HEK293T (cell line): ENCODE measurements at regions of chr16 and their contacts with region 1.

Region 1: DNA sequence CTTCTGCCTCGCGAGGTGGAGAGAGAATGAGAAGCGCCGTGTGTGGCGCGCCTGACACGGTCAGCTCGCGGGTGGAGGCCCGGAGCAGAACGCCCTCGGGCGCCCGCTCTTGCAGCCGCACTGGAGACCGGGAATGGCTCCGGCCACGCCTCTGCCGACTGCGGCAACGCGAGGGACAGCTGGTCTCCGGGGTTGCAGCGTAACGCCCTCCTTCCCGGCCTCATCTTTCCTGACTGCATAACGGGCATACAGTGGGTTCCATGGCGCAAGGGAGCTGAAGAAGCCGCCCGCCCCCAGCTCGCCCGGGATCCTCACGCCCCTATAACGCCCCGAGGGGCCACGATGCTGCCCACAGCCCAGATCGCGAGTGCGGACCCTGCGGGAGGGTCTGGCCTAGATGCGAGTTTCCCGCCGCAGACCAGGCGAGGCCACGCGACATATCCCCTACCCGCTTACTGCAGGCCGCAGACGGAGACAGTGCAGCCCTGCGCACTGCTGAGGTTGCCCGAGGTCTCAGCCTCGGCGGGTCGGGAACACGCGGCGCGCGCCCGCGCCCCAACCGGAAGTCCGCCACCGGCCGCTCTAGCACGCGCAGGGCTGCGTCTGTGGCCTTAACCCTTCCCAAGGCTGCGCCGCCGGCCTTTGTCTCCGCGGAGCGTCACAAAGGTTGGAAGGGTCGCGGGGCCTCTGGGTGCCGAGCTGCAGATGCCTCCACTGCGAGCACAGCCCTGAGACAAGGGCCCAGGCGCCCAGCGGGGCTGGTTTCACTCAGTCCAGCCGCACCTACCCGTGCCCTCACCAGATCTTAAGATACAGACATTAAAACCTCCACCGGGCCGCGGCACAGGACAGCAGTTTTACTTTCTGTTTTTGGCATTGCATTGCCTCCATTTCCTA is 18.8 kb downstream of the BCL7C start:
- DNase-seq: peak; percentile 97

Region 2: DNA sequence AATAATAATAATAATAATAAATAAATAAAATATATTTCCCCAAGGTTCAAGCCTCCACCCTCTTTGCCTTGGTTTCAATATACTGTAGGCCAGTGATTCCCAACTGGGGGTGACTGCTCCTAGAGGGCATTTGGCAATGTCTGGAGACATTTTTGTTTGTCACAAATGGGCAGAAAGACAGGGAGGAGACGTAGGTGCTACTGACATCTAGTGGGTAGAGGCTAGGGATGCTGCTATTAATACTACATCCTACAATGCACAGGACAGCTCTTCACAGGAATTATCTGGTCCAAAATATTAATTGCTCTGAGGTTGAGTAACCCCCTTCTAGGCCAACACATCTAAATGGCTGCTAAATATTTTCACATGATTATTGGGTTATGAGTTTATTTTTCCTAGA is 237.1 kb before region 1 on chr16:
- CTCF ChIA-PET with region 1: no interaction called
- POLR2A ChIA-PET with region 1: no interaction called
- DNase-seq: peak; percentile 48

Region 3: DNA sequence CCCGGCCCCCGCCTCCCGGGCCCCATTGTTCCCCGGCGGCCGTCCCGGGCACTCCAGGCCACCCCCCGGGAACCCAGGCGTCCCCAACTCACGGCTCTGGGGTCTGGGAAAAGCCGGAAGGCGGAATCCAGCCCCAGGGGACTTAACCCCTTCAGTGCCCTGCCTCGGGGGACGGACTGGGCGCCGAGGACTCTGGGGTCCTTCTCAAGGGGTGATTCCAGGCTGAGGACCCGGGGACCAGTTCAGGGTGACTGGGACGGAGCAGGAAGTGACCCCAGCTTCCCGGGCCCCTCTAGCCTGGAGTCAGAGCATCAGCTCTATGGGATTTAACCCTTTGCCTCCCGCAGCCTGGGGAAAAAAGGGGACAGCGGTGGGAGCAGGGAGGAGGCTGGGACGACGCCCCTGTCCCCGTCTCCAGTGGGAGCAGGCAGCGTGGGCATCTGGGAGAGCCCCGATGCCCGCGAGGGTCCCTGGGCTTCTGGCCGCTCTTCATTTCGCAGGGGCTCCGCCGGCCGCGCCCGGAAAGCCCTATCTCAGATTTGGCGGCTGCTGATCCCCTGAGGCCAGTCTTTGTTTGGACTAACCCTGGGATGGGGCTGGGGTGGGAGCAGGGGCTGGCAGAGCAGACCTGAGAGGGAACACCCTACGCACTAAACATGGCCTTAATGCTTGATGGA is 88.0 kb before region 1 on chr16 and contains the start of gene ZNF629:
- CTCF ChIA-PET with region 1: interaction called, 5 read pairs
- POLR2A ChIA-PET with region 1: interaction called, 15 read pairs
- DNase-seq: peak; percentile 86

Region 4: DNA sequence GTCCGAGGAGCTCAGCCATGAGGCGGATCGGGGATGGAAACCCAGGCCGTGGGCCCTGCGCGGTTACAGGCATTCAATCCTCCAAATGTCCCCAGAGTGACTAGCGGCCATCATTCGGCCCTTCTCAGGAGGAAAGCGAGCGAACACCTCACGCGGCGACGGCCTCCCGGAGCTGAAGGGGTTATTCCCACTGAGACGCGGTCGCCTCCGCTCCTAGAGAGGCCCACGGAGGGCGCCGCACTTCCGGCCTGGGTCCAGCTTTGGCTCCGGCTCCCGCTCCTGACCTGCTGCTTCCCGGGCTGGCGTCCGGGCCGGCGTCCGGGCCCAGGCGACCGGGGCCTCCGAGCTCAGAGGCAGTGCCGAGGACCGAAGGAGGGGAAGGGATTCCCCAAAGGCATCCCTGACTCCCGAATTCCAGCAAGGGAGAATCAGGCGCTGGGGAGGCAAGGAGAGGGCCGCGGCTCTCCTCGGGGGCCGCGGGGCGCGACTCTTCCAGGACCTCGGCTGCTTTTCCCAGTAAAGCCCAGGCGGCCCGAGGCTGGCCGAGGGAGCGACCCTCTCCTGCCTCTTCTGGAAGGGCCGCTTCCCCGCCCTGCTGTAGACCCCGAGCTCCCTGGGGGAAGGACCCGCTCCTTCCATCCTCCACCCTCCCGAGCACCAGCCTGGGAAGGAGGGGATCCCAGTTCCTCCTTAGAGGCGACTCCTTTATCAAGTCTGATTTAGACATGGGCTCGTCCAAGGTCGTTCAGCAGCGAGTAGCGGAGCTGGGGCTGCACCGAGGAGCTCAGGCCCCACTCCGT is 69.5 kb before region 1 on chr16:
- CTCF ChIA-PET with region 1: interaction called, 4 read pairs
- POLR2A ChIA-PET with region 1: interaction called, 55 read pairs
- DNase-seq: peak; percentile 95

Region 5: GRCh38 chr16:30844671-30845449 is 30.2 kb before region 1 on chr16:
- CTCF ChIA-PET with region 1: interaction called, 9 read pairs
- POLR2A ChIA-PET with region 1: interaction called, 31 read pairs
- DNase-seq: peak; percentile 93

Region 6: DNA sequence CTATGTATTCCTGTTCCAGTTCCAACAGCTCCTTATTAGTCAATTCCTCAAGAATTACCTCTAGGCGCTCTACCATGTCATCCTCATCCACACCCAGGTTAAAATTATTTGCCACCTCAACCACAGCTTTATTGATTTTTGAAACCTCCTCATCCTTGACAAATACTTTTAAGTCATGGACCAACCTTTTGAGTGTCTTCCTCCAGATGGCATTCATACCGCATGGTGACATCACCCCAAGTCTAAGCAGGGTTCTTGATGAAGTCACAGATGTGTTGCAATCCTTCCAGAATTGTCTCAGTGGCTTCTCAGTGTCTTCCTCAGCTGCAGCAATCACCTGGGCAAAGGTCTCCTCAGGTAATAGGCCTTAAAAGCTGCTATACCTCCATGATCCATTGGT is 21.3 kb before region 1 on chr16:
- CTCF ChIA-PET with region 1: no interaction called
- POLR2A ChIA-PET with region 1: interaction called, 17 read pairs
- DNase-seq: no peak

Region 7: GRCh38 chr16:30893744-30894539 is 18.9 kb after region 1 on chr16 and contains the start of gene BCL7C:
- CTCF ChIA-PET with region 1: interaction called, 4 read pairs
- POLR2A ChIA-PET with region 1: interaction called, 50 read pairs
- DNase-seq: peak; percentile 97

Region 8: DNA sequence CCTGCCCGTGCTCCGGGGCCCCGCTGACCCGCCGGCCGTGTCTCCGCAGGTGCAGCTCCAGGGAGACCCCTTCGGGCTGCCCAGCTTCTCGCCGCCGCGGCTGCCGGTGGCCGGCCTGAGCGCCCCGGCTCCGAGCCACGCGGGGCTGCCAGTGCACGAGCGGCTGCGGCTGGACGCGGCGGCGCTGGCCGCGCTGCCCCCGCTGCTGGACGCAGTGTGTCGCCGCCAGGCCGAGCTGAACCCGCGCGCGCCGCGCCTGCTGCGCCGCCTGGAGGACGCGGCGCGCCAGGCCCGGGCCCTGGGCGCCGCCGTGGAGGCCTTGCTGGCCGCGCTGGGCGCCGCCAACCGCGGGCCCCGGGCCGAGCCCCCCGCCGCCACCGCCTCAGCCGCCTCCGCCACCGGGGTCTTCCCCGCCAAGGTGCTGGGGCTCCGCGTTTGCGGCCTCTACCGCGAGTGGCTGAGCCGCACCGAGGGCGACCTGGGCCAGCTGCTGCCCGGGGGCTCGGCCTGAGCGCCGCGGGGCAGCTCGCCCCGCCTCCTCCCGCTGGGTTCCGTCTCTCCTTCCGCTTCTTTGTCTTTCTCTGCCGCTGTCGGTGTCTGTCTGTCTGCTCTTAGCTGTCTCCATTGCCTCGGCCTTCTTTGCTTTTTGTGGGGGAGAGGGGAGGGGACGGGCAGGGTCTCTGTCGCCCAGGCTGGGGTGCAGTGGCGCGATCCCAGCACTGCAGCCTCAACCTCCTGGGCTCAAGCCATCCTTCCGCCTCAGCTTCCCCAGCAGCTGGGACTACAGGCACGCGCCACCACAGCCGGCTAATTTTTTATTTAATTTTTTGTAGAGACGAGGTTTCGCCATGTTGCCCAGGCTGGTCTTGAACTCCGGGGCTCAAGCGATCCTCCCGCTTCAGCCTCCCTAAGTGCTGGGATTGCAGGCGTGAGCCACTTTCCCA is 27.2 kb after region 1 on chr16:
- CTCF ChIA-PET with region 1: interaction called, 8 read pairs
- POLR2A ChIA-PET with region 1: interaction called, 50 read pairs
- DNase-seq: peak; percentile 91